Sigmoid colon (tissue), 7 donors: ENCODE measurements at regions of chr19 and their contacts with region 1.

Region 1: GRCh38 chr19:35114353-35115176 is 1.1 kb upstream of the FXYD3 start:
- DNase-seq: peak; percentile 86
- H3K4me3 ChIP-seq: peak overlapping the region in 3 of 4 donors; percentile 19 to 38 (median 30)
- H3K27ac ChIP-seq: peak overlapping the region; percentile 10 to 67 (median 54)
- H3K4me1 ChIP-seq: peaks cover 0 to 10% (median 9%) of the 10 kb centered on the region in 4 donors
- H3K27me3 ChIP-seq: peaks cover 0 to 5% (median 0%) of the 10 kb centered on the region in 3 donors
- CTCF ChIP-seq: peak; percentile 86 to 96 (median 94)
- EP300 ChIP-seq: no peak
- POLR2A ChIP-seq: peak in 1 of 2 donors; percentile 56

Region 2: DNA sequence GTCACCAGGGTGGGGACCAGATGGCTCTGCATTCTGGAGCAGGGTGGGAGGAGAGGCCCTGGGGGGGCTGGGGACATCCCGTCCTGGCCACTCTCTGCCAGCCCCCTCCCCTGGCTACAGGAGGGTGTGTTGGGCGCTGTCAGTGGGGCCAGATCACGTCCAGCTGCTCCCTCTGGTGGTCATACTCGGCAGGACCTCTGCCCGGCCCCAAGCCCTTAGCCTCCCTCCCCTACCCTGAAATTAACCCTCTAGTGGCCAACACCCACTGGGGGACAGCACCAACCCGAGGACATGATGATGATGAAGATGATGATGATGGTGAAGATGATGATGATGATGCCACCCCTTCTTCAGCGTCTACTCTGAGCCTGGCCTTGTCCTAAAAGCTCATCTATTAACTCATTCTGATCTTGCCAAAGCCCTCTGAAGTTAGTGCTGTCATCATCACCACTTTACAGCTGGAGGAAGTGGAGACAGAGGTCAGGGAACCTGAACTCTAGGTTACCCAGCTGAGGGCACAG is 20.9 kb after region 1 on chr19:
- intact Hi-C with region 1: loop called (anchors 2 kb)
- DNase-seq: peak; percentile 90
- H3K4me3 ChIP-seq: peak overlapping the region; percentile 17 to 39 (median 36)
- H3K27ac ChIP-seq: peak overlapping the region; percentile 71 to 84 (median 79)
- H3K4me1 ChIP-seq: peaks cover 0 to 32% (median 21%) of the 10 kb centered on the region in 4 donors
- H3K27me3 ChIP-seq: peaks cover 12 to 38% (median 13%) of the 10 kb centered on the region in 3 donors
- CTCF ChIP-seq: peak; percentile 80 to 95 (median 87)
- EP300 ChIP-seq: peak in 1 of 4 donors; percentile 38
- POLR2A ChIP-seq: no peak

Region 3: GRCh38 chr19:35146746-35147459 is 32.3 kb after region 1 on chr19:
- intact Hi-C with region 1: no loop called
- DNase-seq: no peak
- H3K4me3 ChIP-seq: no peak overlapping the region
- H3K27ac ChIP-seq: no peak overlapping the region
- H3K4me1 ChIP-seq: peaks cover 0 to 15% (median 14%) of the 10 kb centered on the region in 4 donors
- H3K27me3 ChIP-seq: peaks cover 15 to 61% (median 28%) of the 10 kb centered on the region in 3 donors
- CTCF ChIP-seq: no peak
- EP300 ChIP-seq: no peak
- POLR2A ChIP-seq: no peak

Region 4: GRCh38 chr19:35224681-35225571 is 110.4 kb after region 1 on chr19:
- intact Hi-C with region 1: no loop called
- DNase-seq: no peak
- H3K4me3 ChIP-seq: no peak overlapping the region
- H3K27ac ChIP-seq: no peak overlapping the region
- H3K4me1 ChIP-seq: no peaks in the 10 kb centered on the region
- H3K27me3 ChIP-seq: peaks cover 0 to 38% (median 6%) of the 10 kb centered on the region in 3 donors
- CTCF ChIP-seq: no peak
- EP300 ChIP-seq: no peak
- POLR2A ChIP-seq: no peak